PC-9 (cell line): ENCODE measurements at regions of chr5 and their contacts with region 1.

Region 1: DNA sequence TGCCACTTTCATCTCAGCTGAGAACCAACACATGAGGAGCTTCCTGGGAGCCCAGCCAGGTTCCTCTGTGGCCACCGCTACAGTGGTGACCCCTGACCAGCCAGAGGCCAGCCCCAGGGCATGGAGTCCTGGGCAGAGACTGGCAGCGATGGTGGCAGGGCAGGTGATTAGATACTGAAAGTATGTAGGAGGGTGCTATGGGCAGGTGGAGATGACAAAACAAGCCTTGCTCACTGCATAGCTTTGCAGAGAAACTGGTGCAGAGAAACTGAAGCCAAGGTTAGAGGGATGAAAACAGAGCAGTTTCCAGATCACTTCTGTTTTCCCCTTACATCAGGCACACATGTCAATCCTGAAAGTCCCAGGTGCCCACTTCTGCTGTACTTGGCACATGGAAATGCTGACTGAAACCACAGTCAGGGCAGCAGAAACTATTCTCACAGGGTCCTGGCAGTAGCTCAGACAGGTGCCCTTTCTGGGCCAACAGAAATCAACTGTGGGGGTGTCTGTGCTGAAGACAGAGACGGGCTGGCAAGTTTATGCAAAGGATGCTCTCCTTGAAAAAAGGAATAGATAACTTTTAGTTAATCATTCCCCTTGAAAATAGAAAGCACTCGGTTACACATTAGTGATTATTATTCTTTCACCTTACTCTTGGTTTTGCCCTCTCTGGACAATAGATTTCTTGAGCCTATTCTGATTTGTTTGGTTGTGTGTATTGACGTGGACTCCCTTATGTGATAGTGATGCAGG is 90.3 kb downstream of the ANKRD55 start:
- DNase-seq: peak; percentile 96
- H3K4me3 ChIP-seq: no peak overlapping the region
- H3K27ac ChIP-seq: peak overlapping the region; percentile 92
- H3K4me1 ChIP-seq: peaks cover 47% of the 10 kb centered on the region
- H3K27me3 ChIP-seq: no peaks in the 10 kb centered on the region
- CTCF ChIP-seq: no peak

Region 2: GRCh38 chr5:55982957-55983381 is 159.8 kb before region 1 on chr5:
- CTCF ChIA-PET with region 1: no interaction called
- POLR2A ChIA-PET with region 1: no interaction called
- intact Hi-C with region 1: loop called (anchors 5 kb)
- DNase-seq: no peak
- H3K4me3 ChIP-seq: no peak overlapping the region
- H3K27ac ChIP-seq: no peak overlapping the region
- H3K4me1 ChIP-seq: no peaks in the 10 kb centered on the region
- H3K27me3 ChIP-seq: no peaks in the 10 kb centered on the region
- CTCF ChIP-seq: peak; percentile 43

Region 3: GRCh38 chr5:56105511-56106291 is 37.1 kb before region 1 on chr5:
- CTCF ChIA-PET with region 1: no interaction called
- POLR2A ChIA-PET with region 1: interaction called, 10 read pairs
- intact Hi-C with region 1: no loop called
- DNase-seq: no peak
- H3K4me3 ChIP-seq: no peak overlapping the region
- H3K27ac ChIP-seq: no peak overlapping the region
- H3K4me1 ChIP-seq: peaks cover 13% of the 10 kb centered on the region
- H3K27me3 ChIP-seq: no peaks in the 10 kb centered on the region
- CTCF ChIP-seq: no peak

Region 4: GRCh38 chr5:56112526-56113121 is 30.2 kb before region 1 on chr5:
- CTCF ChIA-PET with region 1: no interaction called
- POLR2A ChIA-PET with region 1: no interaction called
- intact Hi-C with region 1: loop called (anchors 1 kb)
- DNase-seq: peak; percentile 81 to 98
- H3K4me3 ChIP-seq: no peak overlapping the region
- H3K27ac ChIP-seq: peak overlapping the region; percentile 95
- H3K4me1 ChIP-seq: peaks cover 35% of the 10 kb centered on the region
- H3K27me3 ChIP-seq: no peaks in the 10 kb centered on the region
- CTCF ChIP-seq: no peak

Region 5: DNA sequence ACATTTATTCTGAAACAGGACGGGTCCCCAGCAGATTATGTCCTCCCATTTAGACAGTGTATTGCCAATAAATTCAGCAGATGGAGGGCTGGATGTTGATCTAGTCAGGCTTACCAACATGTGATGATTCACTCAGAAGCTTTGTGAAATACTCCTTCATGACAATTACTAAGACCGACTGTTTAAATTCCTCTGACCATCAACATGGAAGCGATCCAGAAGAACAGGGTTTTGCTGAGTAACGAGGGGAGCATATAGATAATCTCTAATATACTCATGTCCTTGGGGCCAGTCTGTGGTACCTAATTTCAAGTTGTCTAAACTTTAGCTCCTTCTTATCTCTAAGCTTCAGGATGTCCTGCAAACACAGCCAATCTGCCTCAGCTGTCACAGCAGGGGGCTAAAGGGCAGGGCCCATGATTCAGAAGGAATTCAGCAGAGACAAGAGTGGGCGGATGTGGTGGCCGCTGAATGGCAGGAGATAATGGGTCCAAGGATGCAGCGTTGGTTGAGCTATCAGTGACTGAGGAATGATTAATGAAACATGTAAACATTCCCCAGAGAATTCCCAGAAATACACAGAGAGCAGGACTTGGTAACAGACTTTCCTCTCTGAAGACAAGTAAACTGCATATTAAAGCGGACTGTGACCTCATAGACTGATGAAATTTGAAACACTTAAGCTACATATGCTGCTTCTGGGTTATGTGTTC is 19.1 kb before region 1 on chr5:
- CTCF ChIA-PET with region 1: no interaction called
- POLR2A ChIA-PET with region 1: no interaction called
- intact Hi-C with region 1: loop called (anchors 2 kb)
- DNase-seq: peak; percentile 88 to 96
- H3K4me3 ChIP-seq: no peak overlapping the region
- H3K27ac ChIP-seq: peak overlapping the region; percentile 84
- H3K4me1 ChIP-seq: peaks cover 34% of the 10 kb centered on the region
- H3K27me3 ChIP-seq: no peaks in the 10 kb centered on the region
- CTCF ChIP-seq: no peak

Region 6: GRCh38 chr5:56301041-56301440 is 158.2 kb after region 1 on chr5:
- CTCF ChIA-PET with region 1: no interaction called
- POLR2A ChIA-PET with region 1: no interaction called
- intact Hi-C with region 1: no loop called
- DNase-seq: no peak
- H3K4me3 ChIP-seq: no peak overlapping the region
- H3K27ac ChIP-seq: no peak overlapping the region
- H3K4me1 ChIP-seq: peaks cover 6% of the 10 kb centered on the region; the same call in 1 of the 2 replicates
- H3K27me3 ChIP-seq: no peaks in the 10 kb centered on the region
- CTCF ChIP-seq: no peak